Spleen (tissue), 13 donors: ENCODE measurements at regions of chr7 and their contacts with region 1.

Region 1: DNA sequence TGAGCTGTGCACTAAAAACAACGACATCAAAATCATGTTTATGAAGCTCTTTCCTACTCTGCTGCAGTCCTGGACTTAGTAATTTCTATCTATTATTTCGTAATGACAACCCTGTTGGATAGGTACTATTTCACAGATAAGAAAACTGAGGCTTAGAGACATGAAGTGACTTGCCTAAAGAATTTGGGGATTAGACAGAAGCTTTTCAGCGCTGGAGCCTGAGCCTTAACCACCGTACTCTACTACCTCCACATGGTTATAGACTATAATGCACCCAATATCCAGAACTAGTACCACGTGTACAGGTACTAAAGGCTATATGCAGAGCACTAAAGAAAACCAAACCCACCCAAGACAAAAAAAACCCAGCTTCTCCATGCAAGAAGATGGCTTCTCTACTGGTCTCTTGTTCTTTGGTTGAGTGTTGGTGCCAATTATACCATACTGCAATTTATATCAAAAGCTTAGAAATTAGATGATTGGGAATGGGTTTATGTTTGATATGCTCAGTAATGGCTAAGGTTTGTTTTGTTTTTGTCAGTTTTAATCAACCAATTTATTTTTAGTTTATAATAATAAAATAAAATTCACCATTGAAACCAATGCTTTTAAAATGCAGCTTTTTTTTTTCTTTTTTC is 6.5 kb upstream of the SNX10 start:
- DNase-seq: no peak
- H3K4me3 ChIP-seq: no peak overlapping the region
- H3K27ac ChIP-seq: no peak overlapping the region
- H3K4me1 ChIP-seq: peaks cover 0 to 13% (median 0%) of the 10 kb centered on the region in 6 donors
- H3K27me3 ChIP-seq: no peaks in the 10 kb centered on the region
- CTCF ChIP-seq: peak in 2 of 11 experiments; percentile 11 to 16
- POLR2A ChIP-seq: no peak

Region 2: DNA sequence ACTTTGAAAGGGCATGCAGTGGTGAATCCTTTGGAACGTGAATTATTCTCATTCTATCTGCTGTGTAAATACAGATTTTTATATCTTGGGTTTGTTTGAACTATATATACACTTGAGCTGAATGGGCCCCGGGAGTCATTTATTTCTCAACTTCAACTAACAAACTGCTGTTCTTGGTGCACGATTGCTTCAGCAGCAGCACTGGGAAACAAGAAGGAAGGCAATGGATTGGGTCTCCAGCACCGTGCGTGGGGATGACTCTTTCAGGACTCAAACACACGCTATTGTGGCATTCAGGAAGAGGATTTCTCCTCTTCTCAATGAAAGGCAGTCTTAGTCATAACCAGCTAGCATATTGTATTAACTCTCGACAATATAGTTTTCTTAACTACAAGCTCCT is 359.1 kb before region 1 on chr7:
- intact Hi-C with region 1: no loop called
- DNase-seq: no peak
- H3K4me3 ChIP-seq: no peak overlapping the region
- H3K27ac ChIP-seq: no peak overlapping the region
- H3K4me1 ChIP-seq: no peaks in the 10 kb centered on the region
- H3K27me3 ChIP-seq: peaks cover 0 to 27% (median 0%) of the 10 kb centered on the region in 7 donors
- CTCF ChIP-seq: no peak
- POLR2A ChIP-seq: no peak

Region 3: GRCh38 chr7:26200444-26201246 is 84.5 kb before region 1 on chr7 and contains the start of gene HNRNPA2B1:
- intact Hi-C with region 1: loop called (anchors 5 kb)
- DNase-seq: peak; percentile 99
- H3K4me3 ChIP-seq: peak within 1 kb of the TSS; percentile 51 to 93 (median 89)
- H3K27ac ChIP-seq: peak within 1 kb of the TSS; percentile 99 to 100 (median 100)
- H3K4me1 ChIP-seq: peaks cover 43 to 69% (median 56%) of the 10 kb centered on the region in 6 donors
- H3K27me3 ChIP-seq: no peaks in the 10 kb centered on the region
- CTCF ChIP-seq: peak in 7 of 11 experiments; percentile 7 to 56 (median 51)
- POLR2A ChIP-seq: peak; percentile 100
- total RNA-seq, gene HNRNPA2B1: 267 to 549 (median 418) TPM